MCF 10A (cell line): ENCODE measurements at regions of chr17 and their contacts with region 1.

Region 1: DNA sequence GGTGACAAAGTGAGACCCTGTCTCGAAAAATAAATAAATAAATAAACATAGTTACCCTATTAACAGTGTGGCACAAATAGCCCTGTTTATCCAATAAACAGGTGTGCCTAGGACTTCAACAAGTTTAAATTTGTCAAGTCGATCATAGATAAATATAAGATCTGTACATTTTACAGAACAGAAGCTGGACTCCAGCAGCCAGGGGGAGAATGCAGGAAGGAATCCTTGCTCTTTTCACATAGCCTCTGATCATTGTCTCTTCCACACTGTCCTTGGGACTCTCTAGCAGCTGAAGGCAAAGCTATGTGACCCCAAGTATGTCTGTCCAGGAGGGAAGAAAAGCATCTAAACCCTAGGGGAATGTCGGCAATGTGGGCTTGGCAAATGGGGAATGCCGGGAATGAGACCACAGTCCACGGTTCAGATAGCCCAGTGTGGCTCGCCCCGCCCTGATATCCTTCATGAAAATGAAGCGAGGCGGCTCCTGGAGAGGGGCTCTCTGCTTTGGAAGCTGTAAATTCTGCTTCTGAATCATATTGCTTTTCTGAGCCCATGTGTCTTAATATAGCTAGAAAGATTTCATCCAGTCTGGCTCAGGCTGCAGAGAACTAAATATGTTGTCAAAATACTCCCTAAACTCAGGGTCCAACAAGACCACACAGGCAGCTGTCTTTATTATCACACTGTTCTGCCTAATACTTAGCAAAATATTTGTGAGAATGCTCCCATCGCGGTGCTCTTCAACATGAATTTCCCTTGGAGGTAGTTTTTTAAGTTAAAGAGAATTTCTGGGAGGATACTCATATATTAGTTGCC is 24.9 kb upstream of the GRB2 start:
- DNase-seq: no peak
- H3K4me3 Mint-ChIP-seq: no peak overlapping the region
- H3K27ac Mint-ChIP-seq: no peak overlapping the region
- H3K4me1 Mint-ChIP-seq: peaks cover 5% of the 10 kb centered on the region
- H3K27me3 Mint-ChIP-seq: no peaks in the 10 kb centered on the region
- CTCF ChIP-seq: no peak

Region 2: DNA sequence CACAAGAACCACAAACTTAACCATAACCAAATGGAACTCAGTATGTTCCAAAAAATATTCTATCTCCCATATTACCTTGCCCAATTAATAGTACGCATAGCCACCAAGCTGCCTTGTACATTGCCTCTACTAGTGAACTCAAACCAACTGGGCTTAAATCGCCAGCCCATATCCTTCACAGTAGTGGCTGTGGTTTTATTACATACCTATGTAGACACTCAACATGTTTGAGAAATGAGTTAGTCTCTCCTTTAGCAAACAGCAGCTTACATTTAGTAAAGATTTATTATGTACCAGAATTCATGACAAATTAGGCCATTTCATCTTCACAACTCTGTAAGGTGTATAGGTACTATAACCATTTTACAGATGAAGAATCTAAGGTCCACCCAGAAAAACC is 66.3 kb before region 1 on chr17:
- CTCF ChIA-PET with region 1: no interaction called
- POLR2A ChIA-PET with region 1: no interaction called
- intact Hi-C with region 1: no loop called
- DNase-seq: peak; percentile 21
- H3K4me3 Mint-ChIP-seq: no peak overlapping the region
- H3K27ac Mint-ChIP-seq: no peak overlapping the region
- H3K4me1 Mint-ChIP-seq: peaks cover 28% of the 10 kb centered on the region
- H3K27me3 Mint-ChIP-seq: no peaks in the 10 kb centered on the region
- CTCF ChIP-seq: no peak

Region 3: DNA sequence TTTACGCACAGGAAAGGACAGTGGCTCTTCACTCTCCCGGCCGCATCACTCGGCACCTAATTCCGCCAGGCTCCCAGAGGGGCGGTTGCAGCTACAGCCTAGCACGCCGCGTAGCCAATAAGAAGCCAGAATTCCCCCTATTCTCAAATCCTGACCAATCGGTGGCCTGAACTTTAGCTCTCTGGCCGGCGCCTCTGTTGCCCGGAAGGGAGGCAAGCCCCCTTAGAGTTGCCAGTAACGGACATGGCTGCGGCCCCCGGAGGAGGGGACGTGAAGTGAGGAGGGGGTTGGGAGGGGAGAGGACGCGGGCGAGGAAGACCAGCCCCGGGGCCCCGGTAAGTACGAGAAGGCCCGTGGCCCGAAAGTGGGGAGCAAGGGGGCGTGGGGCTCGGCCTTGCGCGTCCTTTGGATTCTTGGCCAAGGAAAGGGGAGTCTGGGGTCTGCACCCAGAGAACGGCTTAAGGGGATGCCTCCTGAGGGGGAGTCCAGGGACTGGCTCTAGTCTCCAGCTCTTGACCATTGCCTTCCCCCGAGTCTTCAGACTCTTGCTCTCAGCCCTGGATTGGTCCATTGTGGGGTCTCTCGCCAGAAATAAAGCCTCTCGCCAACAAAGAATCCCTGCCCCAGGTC is 26.2 kb after region 1 on chr17 and contains the start of gene TMEM94:
- CTCF ChIA-PET with region 1: interaction called, 3 read pairs
- POLR2A ChIA-PET with region 1: interaction called, 10 read pairs
- intact Hi-C with region 1: no loop called
- DNase-seq: peak; percentile 98
- H3K4me3 Mint-ChIP-seq: peak within 1 kb of the TSS; percentile 86
- H3K27ac Mint-ChIP-seq: peak within 1 kb of the TSS; percentile 90
- H3K4me1 Mint-ChIP-seq: peaks cover 22% of the 10 kb centered on the region
- H3K27me3 Mint-ChIP-seq: no peaks in the 10 kb centered on the region
- CTCF ChIP-seq: no peak
- total RNA-seq, gene TMEM94: 42.8 and 46.5 TPM in 2 replicates

Region 4: DNA sequence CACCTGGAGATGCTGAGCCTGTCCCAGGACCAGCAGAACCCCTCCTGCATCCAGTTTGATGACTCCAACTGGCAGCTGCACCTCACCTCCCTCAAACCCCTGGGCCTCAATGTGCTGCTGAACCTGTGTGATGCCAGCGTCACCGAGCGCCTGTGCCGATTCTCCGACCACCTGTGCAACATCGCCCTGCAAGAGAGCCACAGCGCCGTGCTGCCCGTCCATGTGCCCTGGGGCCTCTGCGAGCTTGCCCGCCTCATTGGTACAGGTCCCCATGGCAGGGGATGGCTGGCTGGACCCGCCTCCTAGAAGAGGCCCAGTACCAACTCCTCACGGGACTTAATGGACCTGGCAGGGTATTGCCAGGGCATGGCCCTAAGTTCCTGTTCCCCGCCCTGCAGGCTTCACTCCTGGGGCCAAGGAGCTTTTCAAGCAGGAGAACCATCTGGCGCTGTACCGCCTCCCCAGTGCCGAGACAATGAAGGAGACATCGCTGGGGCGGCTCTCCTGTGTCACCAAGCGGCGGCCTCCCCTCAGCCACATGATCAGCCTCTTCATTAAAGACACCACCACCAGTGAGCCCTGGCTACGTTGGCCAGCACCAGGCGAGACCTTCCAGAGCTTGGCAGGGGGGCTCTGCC is 62.3 kb after region 1 on chr17:
- CTCF ChIA-PET with region 1: no interaction called
- POLR2A ChIA-PET with region 1: no interaction called
- intact Hi-C with region 1: no loop called
- DNase-seq: no peak
- H3K4me3 Mint-ChIP-seq: no peak overlapping the region
- H3K27ac Mint-ChIP-seq: no peak overlapping the region
- H3K4me1 Mint-ChIP-seq: no peaks in the 10 kb centered on the region
- H3K27me3 Mint-ChIP-seq: no peaks in the 10 kb centered on the region
- CTCF ChIP-seq: no peak

Region 5: DNA sequence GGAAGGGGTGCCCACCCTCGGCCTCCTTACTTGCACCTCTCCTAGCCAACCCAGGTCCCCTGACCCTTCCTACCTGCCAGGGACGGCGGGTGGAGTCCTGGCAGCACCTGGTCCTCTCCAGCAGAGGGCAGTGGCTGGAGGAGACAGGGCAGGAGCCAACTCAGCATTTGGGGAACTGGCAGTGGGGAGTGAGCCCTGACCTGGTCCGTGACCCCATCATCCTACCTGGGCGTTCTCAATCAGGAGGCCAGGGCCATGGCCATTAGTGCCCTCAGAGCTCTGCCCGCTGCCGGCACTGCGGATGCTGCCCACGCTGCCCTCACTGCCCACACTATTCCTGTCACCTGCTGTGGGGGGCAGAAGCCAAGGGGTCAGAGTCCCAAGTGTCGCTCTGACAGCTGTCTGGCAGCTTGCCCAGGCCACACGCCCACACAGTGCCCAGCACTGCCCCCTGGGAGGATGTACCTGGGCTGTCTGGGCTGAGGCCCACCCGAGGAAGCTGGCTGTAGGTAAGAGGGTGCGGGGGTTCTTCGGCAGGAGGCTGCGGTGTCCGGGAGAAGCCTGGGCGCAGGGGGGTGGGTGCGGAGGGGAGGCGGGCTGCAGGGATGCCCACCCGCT is 74.1 kb after region 1 on chr17:
- CTCF ChIA-PET with region 1: interaction called, 3 read pairs
- POLR2A ChIA-PET with region 1: no interaction called
- intact Hi-C with region 1: loop called (anchors 1 kb)
- DNase-seq: peak; percentile 55
- H3K4me3 Mint-ChIP-seq: no peak overlapping the region
- H3K27ac Mint-ChIP-seq: no peak overlapping the region
- H3K4me1 Mint-ChIP-seq: peaks cover 5% of the 10 kb centered on the region
- H3K27me3 Mint-ChIP-seq: no peaks in the 10 kb centered on the region
- CTCF ChIP-seq: peak; percentile 68

Region 6: DNA sequence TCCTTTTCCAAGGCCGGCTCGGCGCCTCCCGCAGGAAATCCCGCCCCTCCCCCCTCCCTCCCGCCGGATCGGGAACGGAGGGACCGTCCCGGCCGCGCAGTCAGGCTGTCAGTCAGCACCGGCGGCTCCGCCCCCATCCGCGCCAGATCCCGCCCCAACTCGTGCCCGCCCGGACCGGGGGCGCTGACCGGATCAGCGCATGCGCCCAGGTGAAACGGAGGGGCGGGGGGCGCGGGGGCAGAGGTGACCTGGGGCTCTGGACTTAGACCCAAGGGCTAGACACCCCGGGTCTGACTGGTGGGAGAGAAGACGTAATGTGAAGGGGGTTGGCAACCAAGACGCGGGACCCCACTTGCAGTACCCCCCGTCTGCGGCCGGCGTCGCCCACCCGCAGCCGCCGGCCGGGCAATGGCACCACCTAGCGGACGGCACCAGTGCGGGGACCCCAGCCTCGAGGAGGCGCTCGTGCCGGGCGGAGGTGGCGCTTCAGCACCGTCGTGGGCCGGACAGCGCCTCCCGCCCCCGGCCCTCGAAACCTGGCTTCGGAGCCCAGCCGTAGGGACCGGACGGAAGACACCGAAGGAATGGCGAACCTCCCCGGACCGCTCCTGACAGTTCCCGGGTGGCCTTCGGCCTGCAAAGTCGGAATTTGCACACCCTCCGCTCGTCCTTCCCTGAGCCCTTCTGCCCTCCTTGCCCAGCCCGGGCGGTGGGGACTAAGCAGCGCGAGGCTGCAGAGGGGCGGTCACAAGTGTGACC is 85.3 kb after region 1 on chr17 and contains the start of gene CASKIN2:
- CTCF ChIA-PET with region 1: interaction called, 3 read pairs
- POLR2A ChIA-PET with region 1: interaction called, 4 read pairs
- intact Hi-C with region 1: loop called (anchors 2 kb)
- DNase-seq: peak; percentile 91
- H3K4me3 Mint-ChIP-seq: peak within 1 kb of the TSS; percentile 81
- H3K27ac Mint-ChIP-seq: no peak within 1 kb of the TSS
- H3K4me1 Mint-ChIP-seq: peaks cover 11% of the 10 kb centered on the region
- H3K27me3 Mint-ChIP-seq: no peaks in the 10 kb centered on the region
- CTCF ChIP-seq: peak; percentile 96
- total RNA-seq, gene CASKIN2: 19.2 and 19.8 TPM in 2 replicates

Region 7: DNA sequence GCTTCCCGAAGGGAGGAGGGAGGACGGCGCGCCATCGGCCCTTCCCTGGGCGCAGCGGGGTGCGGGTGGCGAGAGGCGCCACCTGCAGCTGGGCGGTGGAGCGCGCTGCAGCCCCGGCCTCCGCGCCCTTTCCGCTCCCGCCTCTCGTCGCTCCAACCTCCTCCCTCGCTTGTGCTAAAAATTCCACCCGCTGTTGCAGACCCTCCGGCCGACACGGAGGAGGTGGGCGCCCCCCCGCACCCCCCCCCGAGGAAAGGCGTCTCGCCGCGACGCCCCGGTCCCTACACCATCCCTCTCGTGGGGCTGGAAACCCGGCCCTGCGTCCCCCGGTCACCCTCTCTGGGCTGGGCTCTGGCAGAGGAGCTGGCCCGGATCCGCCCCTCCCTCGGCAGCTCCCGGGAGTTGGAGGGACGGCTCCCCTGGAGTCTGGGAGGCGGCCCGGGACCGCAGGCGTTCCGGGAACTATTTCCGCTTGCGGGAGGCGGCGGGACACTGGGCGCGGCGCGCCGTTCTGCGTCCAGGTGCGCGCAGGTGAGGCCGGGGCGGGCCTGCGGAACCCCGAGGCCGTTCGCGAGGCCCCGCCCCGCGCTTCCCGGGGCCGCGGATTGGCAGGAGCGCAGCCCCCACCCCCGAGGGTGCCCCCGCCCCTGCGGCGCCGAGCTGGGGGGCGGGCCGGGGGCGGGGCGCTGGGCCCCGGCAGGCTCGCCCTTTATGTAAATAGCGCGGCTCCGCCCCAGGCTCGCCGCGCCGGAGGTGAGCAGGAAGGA is 94.8 kb after region 1 on chr17 and contains the start of gene LLGL2:
- CTCF ChIA-PET with region 1: no interaction called
- POLR2A ChIA-PET with region 1: interaction called, 3 read pairs
- intact Hi-C with region 1: loop called (anchors 1 kb)
- DNase-seq: peak; percentile 84
- H3K4me3 Mint-ChIP-seq: peak within 1 kb of the TSS; percentile 71
- H3K27ac Mint-ChIP-seq: no peak within 1 kb of the TSS
- H3K4me1 Mint-ChIP-seq: peaks cover 7% of the 10 kb centered on the region
- H3K27me3 Mint-ChIP-seq: no peaks in the 10 kb centered on the region
- CTCF ChIP-seq: peak; percentile 27
- total RNA-seq, gene LLGL2: 19.8 and 21.2 TPM in 2 replicates

Region 8: DNA sequence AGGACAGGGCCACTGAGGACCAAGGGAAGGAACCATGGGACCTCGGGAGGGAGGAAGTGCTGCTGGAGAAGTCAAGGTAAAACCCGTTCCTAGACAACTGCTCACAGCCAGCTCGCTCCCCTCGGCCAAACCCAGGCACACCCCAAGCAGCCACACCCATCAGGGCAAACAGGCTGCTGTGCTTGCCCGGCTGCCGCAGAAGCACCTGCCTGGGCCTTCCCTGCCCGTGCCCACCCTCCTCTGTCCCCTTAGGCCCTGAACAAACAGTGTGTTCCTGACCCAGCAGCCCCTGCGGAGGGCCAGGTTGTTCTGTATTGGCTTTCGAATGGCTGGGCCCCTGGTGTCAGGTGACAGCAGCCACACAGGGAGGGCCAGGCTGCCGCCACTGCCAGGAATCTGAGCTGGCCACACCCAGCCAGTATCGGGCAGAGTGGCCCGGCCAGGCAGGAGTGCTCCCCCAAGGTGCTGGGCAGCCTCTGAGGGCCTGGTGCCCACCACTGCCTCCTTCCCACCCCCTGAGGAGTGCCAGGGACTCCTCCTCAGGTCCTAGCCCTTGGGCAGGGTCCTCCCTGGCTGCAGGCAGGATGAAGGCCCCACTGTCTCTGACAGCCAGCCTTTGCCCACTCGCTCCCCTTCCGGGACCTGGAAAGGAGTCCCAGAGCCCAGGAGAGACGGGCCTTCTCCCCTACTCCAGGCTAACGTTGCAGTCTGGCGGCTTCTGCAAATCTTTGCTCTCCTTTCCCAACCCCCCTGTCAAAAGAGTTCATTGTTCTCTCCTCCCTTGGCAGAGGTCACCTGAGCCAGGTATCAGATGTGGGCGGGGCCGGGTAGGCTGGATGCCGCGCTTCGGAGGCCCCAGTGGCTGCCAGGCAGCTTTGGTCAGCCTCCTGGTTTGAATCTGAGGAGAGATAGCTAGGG is 119.1 kb after region 1 on chr17:
- CTCF ChIA-PET with region 1: no interaction called
- POLR2A ChIA-PET with region 1: no interaction called
- intact Hi-C with region 1: no loop called
- DNase-seq: peak; percentile 68
- H3K4me3 Mint-ChIP-seq: no peak overlapping the region
- H3K27ac Mint-ChIP-seq: no peak overlapping the region
- H3K4me1 Mint-ChIP-seq: no peaks in the 10 kb centered on the region
- H3K27me3 Mint-ChIP-seq: no peaks in the 10 kb centered on the region
- CTCF ChIP-seq: no peak

Region 9: GRCh38 chr17:75589012-75589918 is 158.9 kb after region 1 on chr17:
- CTCF ChIA-PET with region 1: no interaction called
- POLR2A ChIA-PET with region 1: no interaction called
- intact Hi-C with region 1: loop called (anchors 2 kb)
- DNase-seq: peak; percentile 85
- H3K4me3 Mint-ChIP-seq: peak overlapping the region; percentile 71
- H3K27ac Mint-ChIP-seq: no peak overlapping the region
- H3K4me1 Mint-ChIP-seq: no peaks in the 10 kb centered on the region
- H3K27me3 Mint-ChIP-seq: no peaks in the 10 kb centered on the region
- CTCF ChIP-seq: peak; percentile 48

Region 10: DNA sequence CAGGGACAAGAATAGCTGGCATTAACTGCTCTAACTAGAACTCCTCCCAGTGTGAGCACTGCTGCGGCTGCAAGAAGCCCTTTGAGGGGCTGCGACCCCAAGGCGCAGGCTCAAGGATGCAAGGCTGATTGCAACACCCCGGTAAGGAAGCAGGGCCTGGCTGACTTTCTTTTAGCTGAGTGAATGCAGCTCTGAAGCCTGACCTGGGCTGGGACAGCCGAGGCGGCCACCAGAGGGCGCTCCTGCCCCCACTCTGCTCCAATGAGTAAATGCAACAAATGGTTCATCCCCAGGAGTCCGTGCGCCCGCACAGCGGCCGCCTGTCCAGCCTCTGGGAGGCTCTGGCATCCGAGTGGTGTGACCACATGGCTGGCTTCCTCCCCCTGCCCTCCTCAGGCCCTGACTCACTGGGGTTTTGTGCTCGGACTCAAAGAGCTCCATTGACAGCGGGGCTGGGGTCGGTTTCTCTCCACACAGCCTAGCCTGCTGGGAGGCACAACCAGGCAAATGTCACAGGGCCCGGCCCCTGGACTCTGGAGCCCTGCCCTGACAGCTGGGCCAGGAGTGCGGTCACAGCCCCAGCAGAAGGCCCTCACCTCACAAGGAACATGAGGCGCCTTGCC is 202.6 kb after region 1 on chr17 and contains the start of gene SMIM5:
- CTCF ChIA-PET with region 1: interaction called, 4 read pairs
- POLR2A ChIA-PET with region 1: no interaction called
- intact Hi-C with region 1: loop called (anchors 10 kb)
- DNase-seq: peak; percentile 78
- H3K4me3 Mint-ChIP-seq: peak within 1 kb of the TSS; percentile 19
- H3K27ac Mint-ChIP-seq: peak within 1 kb of the TSS; percentile 55
- H3K4me1 Mint-ChIP-seq: peaks cover 10% of the 10 kb centered on the region
- H3K27me3 Mint-ChIP-seq: no peaks in the 10 kb centered on the region
- CTCF ChIP-seq: peak; percentile 90
- total RNA-seq, gene SMIM5: 0.09 TPM in 1 of 2 replicates, not detected in the other

Region 11: DNA sequence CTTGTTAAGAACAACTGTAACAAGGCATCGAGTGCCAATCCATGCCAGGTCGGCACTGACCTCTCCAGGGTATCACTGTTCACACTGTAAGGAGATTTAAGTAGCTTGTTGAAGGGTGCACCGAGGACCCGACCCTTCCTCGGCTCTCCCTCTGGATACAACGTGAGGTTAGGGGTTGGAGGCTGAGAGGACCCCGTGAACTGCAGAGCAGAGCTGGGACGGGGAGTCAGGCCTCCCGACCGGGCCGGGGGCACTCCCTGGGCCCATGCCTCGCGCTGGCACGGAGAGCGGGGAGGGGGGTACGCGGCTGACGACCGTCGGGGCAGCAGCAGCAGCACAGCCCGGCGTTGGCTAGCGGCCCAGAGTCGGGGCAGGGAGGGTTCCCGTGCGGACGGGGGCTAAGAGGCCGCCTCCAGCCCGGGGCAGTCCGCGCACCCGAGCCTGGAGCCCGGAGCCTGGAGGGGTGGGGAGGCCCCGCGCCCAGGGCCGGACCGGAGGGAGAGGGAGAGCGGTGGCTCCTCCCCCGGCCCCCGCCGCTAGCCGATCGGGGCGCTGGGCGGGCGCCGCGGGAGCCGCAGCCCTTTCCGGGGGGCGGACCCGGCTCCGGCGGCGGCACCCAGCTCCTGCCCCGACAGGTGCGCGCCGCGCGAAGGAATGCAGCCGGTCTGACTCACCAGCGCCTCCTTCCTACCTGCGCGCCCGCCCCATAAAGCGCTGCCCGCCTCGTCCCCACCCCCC is 290.5 kb after region 1 on chr17 and contains the start of gene ITGB4:
- CTCF ChIA-PET with region 1: no interaction called
- POLR2A ChIA-PET with region 1: no interaction called
- intact Hi-C with region 1: no loop called
- DNase-seq: peak; percentile 85
- H3K4me3 Mint-ChIP-seq: peak within 1 kb of the TSS; percentile 87
- H3K27ac Mint-ChIP-seq: peak within 1 kb of the TSS; percentile 78
- H3K4me1 Mint-ChIP-seq: peaks cover 6% of the 10 kb centered on the region
- H3K27me3 Mint-ChIP-seq: no peaks in the 10 kb centered on the region
- CTCF ChIP-seq: no peak
- total RNA-seq, gene ITGB4: 727 and 1,054 TPM in 2 replicates